Common myeloid progenitor, CD34-positive (primary cell): ENCODE measurements at regions of chr11 and their contacts with region 1.

Region 1: GRCh38 chr11:114262681-114263512 is 33.3 kb upstream of the NNMT start:
- DNase-seq: peak; percentile 53 to 80 (median 78)
- H3K4me3 ChIP-seq: no peak overlapping the region
- H3K27ac ChIP-seq: no peak overlapping the region
- H3K4me1 ChIP-seq: peaks cover 0 to 23% (median 22%) of the 10 kb centered on the region in 4 experiments
- H3K27me3 ChIP-seq: peaks cover 0 to 11% (median 11%) of the 10 kb centered on the region in 5 experiments

Region 2: DNA sequence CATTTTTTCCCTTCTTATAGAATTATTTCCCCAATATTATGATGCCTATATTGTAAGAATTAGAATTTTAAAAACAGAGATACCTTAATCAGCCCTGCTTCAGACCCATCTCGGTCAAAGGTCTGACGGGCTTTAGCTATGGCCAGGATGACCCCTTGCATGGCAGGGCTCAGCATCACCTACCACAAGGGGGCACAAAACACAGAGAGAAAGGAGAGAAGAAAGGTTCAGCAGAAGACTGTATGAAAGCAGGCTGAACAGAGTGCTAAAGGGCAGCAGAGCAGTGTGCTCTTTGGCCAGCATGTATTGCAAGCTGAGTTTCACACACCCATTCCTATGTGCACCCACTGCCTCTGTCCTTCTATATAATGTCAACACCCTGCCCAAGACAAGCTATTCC is 456.5 kb before region 1 on chr11:
- CTCF ChIA-PET with region 1: interaction called, 37 read pairs
- POLR2A ChIA-PET with region 1: no interaction called
- DNase-seq: peak; percentile 8 to 21 (median 19)
- H3K4me3 ChIP-seq: no peak overlapping the region
- H3K27ac ChIP-seq: no peak overlapping the region
- H3K4me1 ChIP-seq: no peaks in the 10 kb centered on the region
- H3K27me3 ChIP-seq: no peaks in the 10 kb centered on the region

Region 3: GRCh38 chr11:113985906-113986305 is 277.0 kb before region 1 on chr11:
- CTCF ChIA-PET with region 1: interaction called, 327 read pairs
- POLR2A ChIA-PET with region 1: no interaction called
- DNase-seq: no peak
- H3K4me3 ChIP-seq: no peak overlapping the region
- H3K27ac ChIP-seq: no peak overlapping the region
- H3K4me1 ChIP-seq: no peaks in the 10 kb centered on the region
- H3K27me3 ChIP-seq: peaks cover 0 to 8% (median 7%) of the 10 kb centered on the region in 5 experiments

Region 4: DNA sequence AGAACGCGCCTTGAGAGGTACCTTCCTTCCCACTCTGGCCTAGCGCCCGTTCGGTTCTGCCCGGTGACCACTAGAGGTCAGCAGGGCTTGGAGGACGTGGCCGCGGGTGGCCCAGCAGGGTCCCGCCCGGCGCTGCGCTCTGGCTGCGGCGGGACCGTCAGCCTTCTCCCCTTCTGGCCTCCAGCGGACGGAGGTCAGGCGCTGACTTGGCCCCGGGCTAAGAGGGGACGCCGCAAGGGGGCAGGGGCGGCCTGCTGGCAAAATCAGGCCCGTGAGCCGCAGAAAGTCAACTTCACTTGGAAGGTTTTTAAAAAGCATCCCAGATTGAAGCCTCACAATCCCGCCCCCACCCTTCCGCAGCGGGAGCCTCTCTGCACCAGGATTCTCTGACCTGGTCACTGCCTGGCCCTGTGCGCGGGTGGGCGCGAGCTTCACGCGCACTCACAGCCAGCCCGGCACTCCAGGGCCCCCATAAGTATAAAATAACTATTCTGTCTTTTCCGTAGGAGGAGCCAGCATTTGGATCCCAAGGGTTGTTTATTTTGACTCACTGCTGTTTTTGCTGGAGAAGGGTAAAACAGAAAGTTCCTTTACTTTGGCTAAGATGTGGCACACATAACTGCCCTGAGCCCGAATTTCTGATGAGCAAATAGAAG is 226.6 kb before region 1 on chr11:
- CTCF ChIA-PET with region 1: interaction called, 168 read pairs
- POLR2A ChIA-PET with region 1: interaction called, 3 read pairs
- DNase-seq: peak; percentile 73 to 76 (median 75)
- H3K4me3 ChIP-seq: peak overlapping the region in 4 of 7 experiments; percentile 6 to 66 (median 37)
- H3K27ac ChIP-seq: no peak overlapping the region
- H3K4me1 ChIP-seq: peaks cover 0 to 9% (median 6%) of the 10 kb centered on the region in 4 experiments
- H3K27me3 ChIP-seq: peaks cover 0 to 4% (median 0%) of the 10 kb centered on the region in 5 experiments

Region 5: GRCh38 chr11:114080219-114080618 is 182.7 kb before region 1 on chr11:
- CTCF ChIA-PET with region 1: interaction called, 13 read pairs
- POLR2A ChIA-PET with region 1: no interaction called
- DNase-seq: peak; percentile 65 to 87 (median 79)
- H3K4me3 ChIP-seq: no peak overlapping the region
- H3K27ac ChIP-seq: peak overlapping the region; percentile 92 to 95
- H3K4me1 ChIP-seq: peaks cover 44 to 97% (median 93%) of the 10 kb centered on the region in 4 experiments
- H3K27me3 ChIP-seq: no peaks in the 10 kb centered on the region

Region 6: DNA sequence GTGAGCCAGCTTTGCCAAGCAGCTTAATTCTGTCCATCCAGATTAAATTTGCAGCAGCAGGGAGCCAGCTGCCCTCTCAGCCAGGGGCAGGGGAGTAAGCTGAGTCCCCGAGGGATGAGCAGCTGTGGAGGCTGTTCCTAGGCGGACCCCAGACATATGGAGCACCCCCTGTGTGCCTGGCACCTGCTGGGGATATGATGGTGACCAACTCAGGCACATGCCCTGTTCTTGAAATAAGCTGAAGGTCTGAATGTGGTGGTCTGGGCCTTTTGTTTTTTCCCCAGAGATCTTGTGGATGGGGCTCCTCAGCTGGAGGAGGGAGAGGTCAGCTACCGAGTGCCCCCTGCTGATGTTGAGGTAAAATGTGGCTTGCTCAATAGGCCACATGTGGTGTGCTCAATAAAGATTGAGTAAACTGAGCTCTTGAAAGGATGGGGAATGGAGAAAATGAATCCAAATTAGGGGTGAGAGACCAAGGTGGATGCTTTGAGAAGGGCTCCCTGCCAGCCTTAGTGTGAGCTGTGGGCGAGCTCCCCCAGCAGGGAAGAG is 70.0 kb before region 1 on chr11:
- CTCF ChIA-PET with region 1: interaction called, 62 read pairs
- POLR2A ChIA-PET with region 1: no interaction called
- DNase-seq: no peak
- H3K4me3 ChIP-seq: no peak overlapping the region
- H3K27ac ChIP-seq: no peak overlapping the region
- H3K4me1 ChIP-seq: peaks cover 2 to 20% (median 7%) of the 10 kb centered on the region in 4 experiments
- H3K27me3 ChIP-seq: no peaks in the 10 kb centered on the region

Region 7: GRCh38 chr11:114250993-114251814 is 11.7 kb before region 1 on chr11:
- CTCF ChIA-PET with region 1: interaction called, 88 read pairs
- POLR2A ChIA-PET with region 1: no interaction called
- DNase-seq: no peak
- H3K4me3 ChIP-seq: no peak overlapping the region
- H3K27ac ChIP-seq: no peak overlapping the region
- H3K4me1 ChIP-seq: no peaks in the 10 kb centered on the region
- H3K27me3 ChIP-seq: no peaks in the 10 kb centered on the region

Region 8: GRCh38 chr11:114291842-114292680 is 29.2 kb after region 1 on chr11:
- CTCF ChIA-PET with region 1: no interaction called
- POLR2A ChIA-PET with region 1: no interaction called
- DNase-seq: no peak
- H3K4me3 ChIP-seq: no peak overlapping the region
- H3K27ac ChIP-seq: no peak overlapping the region
- H3K4me1 ChIP-seq: no peaks in the 10 kb centered on the region
- H3K27me3 ChIP-seq: peaks cover 0 to 8% (median 0%) of the 10 kb centered on the region in 5 experiments

Region 9: GRCh38 chr11:114416441-114416961 is 153.6 kb after region 1 on chr11:
- CTCF ChIA-PET with region 1: no interaction called
- POLR2A ChIA-PET with region 1: no interaction called
- DNase-seq: no peak
- H3K4me3 ChIP-seq: no peak overlapping the region
- H3K27ac ChIP-seq: no peak overlapping the region
- H3K4me1 ChIP-seq: no peaks in the 10 kb centered on the region
- H3K27me3 ChIP-seq: no peaks in the 10 kb centered on the region